IMR-90 (cell line): ENCODE measurements at regions of chr12 and their contacts with region 1.

Region 1: GRCh38 chr12:66409195-66409871 is 107.0 kb downstream of the HELB start:
- DNase-seq: peak; percentile 80
- ATAC-seq: peak; percentile 85
- H3K4me3 ChIP-seq: no peak overlapping the region
- H3K27ac ChIP-seq: no peak overlapping the region
- H3K4me1 ChIP-seq: peaks cover 8% of the 10 kb centered on the region
- H3K27me3 ChIP-seq: no peaks in the 10 kb centered on the region; the same call in none of the 2 replicates
- CTCF ChIP-seq: peak; percentile 81
- POLR2A ChIP-seq: no peak
- RAD21 ChIP-seq: peak; percentile 92

Region 2: DNA sequence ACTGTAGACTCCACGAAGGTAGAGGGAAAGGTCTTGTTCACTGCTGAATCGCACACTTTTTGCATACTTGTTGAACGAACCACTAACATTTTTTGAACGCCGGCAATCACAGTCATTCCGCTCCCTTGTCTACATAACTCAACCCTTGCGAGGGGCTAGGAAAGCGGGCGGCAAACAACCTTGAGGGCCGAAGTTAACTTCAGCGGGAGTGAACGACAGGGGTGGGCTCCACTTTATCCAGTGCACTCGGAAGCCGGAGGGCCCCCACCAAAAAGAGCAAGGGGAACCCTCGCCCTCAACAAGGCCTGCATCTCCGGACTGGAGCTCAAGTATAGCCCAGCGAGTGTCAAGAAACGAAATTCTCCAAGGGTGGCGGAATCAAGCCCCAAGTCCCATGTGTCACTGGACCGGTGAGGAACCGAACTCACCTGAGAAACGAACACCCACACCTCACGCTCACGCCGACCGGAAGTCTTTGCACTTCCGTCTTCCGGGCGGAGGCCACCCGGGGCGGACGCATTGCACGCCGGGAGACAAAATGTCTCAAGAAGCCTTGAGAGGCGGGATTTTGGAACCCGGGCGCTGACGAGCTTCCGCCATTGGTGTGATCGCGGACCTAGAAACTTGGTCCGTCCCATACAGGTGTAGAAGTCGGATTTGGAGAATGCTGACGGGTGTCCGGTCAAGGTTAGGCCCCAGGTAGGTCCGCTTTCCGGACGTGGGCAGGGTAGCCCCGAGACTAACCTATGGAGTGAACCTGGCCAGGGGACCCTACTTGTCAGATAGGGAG is 278.9 kb before region 1 on chr12 and contains the start of gene LLPH:
- CTCF ChIA-PET with region 1: no interaction called
- POLR2A ChIA-PET with region 1: no interaction called
- dilution Hi-C with region 1: no loop called
- in situ Hi-C with region 1: no loop called
- intact Hi-C with region 1: loop called (anchors 5 kb)
- DNase-seq: peak; percentile 84
- ATAC-seq: peak; percentile 88
- H3K4me3 ChIP-seq: peak within 1 kb of the TSS; percentile 78
- H3K27ac ChIP-seq: peak within 1 kb of the TSS; percentile 75
- H3K4me1 ChIP-seq: peaks cover 5% of the 10 kb centered on the region; the same call in 1 of the 2 replicates
- H3K27me3 ChIP-seq: no peaks in the 10 kb centered on the region
- CTCF ChIP-seq: no peak
- POLR2A ChIP-seq: peak; percentile 74; the same call in 1 of the 2 replicates
- RAD21 ChIP-seq: no peak
- total RNA-seq, gene LLPH: 2.7 and 9.2 TPM in 2 replicates

Region 3: GRCh38 chr12:66169221-66170170 is 239.8 kb before region 1 on chr12 and contains the start of gene TMBIM4:
- CTCF ChIA-PET with region 1: no interaction called
- POLR2A ChIA-PET with region 1: no interaction called
- dilution Hi-C with region 1: no loop called
- in situ Hi-C with region 1: loop called (anchors 25 kb)
- intact Hi-C with region 1: no loop called
- DNase-seq: peak; percentile 95
- ATAC-seq: peak; percentile 92
- H3K4me3 ChIP-seq: peak within 1 kb of the TSS; percentile 83
- H3K27ac ChIP-seq: peak within 1 kb of the TSS; percentile 99
- H3K4me1 ChIP-seq: peaks cover 2% of the 10 kb centered on the region; the same call in 1 of the 2 replicates
- H3K27me3 ChIP-seq: no peaks in the 10 kb centered on the region
- CTCF ChIP-seq: peak; percentile 34
- POLR2A ChIP-seq: peak; percentile 80
- RAD21 ChIP-seq: peak; percentile 19; the same call in 1 of the 2 replicates
- total RNA-seq, gene TMBIM4: 59.3 and 89.7 TPM in 2 replicates

Region 4: DNA sequence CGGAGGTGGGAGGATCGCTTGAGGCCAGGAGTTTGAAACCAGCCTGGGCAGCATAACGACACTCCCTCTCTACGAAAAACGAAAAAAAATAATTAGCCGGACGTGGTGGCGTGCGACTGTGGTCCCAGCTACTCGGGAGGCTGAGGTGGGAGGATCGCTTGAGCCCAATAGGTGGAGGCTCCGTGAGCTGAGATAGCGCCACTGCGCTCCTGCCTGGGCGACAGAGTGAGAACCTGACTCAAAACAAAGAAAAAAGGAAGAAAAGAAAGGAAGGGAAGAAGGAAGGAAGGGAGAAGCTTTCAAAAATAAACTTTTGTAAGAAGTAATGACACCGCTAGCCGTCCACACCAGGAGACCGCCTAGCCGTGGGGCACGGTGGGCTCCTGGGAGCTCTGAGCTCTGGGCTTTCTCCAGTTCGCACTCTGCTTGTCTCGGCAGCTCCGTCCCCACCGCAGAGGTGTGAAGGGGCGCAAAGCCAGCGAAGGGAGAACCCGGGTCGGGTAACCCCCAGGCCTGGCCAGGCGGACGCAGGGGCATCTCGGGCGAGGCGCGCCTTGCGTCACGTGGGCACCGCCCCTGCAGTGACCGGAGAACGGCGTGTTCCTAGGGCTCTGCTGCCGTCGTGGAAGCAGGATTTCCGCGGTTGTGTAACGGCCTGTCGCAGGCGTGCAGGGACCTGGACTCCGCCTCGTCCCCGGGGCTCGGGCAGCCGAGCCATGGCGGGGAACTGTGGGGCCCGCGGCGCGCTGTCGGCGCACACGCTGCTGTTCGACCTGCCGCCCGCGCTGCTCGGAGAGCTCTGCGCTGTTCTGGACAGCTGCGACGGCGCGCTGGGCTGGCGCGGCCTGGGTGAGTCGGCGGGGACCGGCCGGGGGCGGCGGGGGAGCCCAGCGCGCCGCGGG is 220.5 kb before region 1 on chr12 and contains the start of gene IRAK3:
- CTCF ChIA-PET with region 1: no interaction called
- POLR2A ChIA-PET with region 1: no interaction called
- dilution Hi-C with region 1: no loop called
- in situ Hi-C with region 1: no loop called
- intact Hi-C with region 1: no loop called
- DNase-seq: peak; percentile 31
- ATAC-seq: peak; percentile 86
- H3K4me3 ChIP-seq: peak within 1 kb of the TSS; percentile 54
- H3K27ac ChIP-seq: peak within 1 kb of the TSS; percentile 18
- H3K4me1 ChIP-seq: no peaks in the 10 kb centered on the region; the same call in 1 of the 2 replicates
- H3K27me3 ChIP-seq: peaks cover under 1% of the 10 kb centered on the region; the same call in 1 of the 2 replicates
- CTCF ChIP-seq: no peak
- POLR2A ChIP-seq: no peak
- RAD21 ChIP-seq: no peak
- total RNA-seq, gene IRAK3: 0.72 and 1.1 TPM in 2 replicates

Region 5: GRCh38 chr12:66279123-66279712 is 130.1 kb before region 1 on chr12:
- CTCF ChIA-PET with region 1: no interaction called
- POLR2A ChIA-PET with region 1: no interaction called
- dilution Hi-C with region 1: no loop called
- in situ Hi-C with region 1: loop called (anchors 10 kb)
- intact Hi-C with region 1: loop called (anchors 1 kb)
- DNase-seq: peak; percentile 22
- ATAC-seq: peak; percentile 75
- H3K4me3 ChIP-seq: no peak overlapping the region
- H3K27ac ChIP-seq: no peak overlapping the region
- H3K4me1 ChIP-seq: no peaks in the 10 kb centered on the region
- H3K27me3 ChIP-seq: peaks cover 19% of the 10 kb centered on the region
- CTCF ChIP-seq: peak; percentile 58
- POLR2A ChIP-seq: no peak
- RAD21 ChIP-seq: peak; percentile 55